ENCODE measurements at regions of chr10 and their contacts with region 1.

Region 1: GRCh38 chr10:80444646-80445319 is 9.3 kb upstream of the TSPAN14 start:
- DNase-seq: no peak
- H3K4me3 ChIP-seq: no peak overlapping the region
- H3K27me3 ChIP-seq: 0 out of 2 replicates have a peak, but pooled peaks cover 1% of the 10 kb centered on the region
- CTCF ChIP-seq: peak; percentile 90

Region 2: DNA sequence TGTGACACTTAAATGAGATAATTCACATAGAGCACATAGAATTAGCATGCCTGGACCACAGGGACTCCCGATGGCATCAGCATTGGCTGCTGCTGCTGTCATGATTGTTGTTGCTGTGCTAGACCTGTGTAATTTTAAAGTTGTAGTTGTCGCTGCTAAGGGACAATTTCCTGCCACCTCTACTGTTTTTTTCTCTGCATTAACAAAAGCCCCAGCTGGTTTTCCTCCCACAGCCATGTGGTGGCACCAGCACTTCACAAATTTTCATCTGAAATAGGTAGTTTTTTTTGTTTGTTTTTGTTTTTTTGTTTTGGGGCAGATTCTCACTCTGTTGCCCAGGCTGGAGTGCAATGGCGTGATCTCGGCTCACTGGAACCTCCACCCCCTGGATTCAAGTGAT is 61.8 kb before region 1 on chr10:
- CTCF ChIA-PET with region 1: interaction called, 10 read pairs
- POLR2A ChIA-PET with region 1: no interaction called
- DNase-seq: no peak
- H3K4me3 ChIP-seq: no peak overlapping the region
- H3K27me3 ChIP-seq: no peaks in the 10 kb centered on the region
- CTCF ChIP-seq: peak; percentile 64

Region 3: GRCh38 chr10:80408242-80409101 is 36.3 kb before region 1 on chr10 and contains the start of gene PRXL2A:
- CTCF ChIA-PET with region 1: no interaction called
- POLR2A ChIA-PET with region 1: no interaction called
- DNase-seq: no peak
- H3K4me3 ChIP-seq: peak within 1 kb of the TSS; percentile 42
- H3K27me3 ChIP-seq: peaks cover 2% of the 10 kb centered on the region; the same call in 1 of the 2 replicates
- CTCF ChIP-seq: no peak
- polyA plus RNA-seq, gene PRXL2A: 1.0 and 1.3 TPM in 2 replicates

Region 4: DNA sequence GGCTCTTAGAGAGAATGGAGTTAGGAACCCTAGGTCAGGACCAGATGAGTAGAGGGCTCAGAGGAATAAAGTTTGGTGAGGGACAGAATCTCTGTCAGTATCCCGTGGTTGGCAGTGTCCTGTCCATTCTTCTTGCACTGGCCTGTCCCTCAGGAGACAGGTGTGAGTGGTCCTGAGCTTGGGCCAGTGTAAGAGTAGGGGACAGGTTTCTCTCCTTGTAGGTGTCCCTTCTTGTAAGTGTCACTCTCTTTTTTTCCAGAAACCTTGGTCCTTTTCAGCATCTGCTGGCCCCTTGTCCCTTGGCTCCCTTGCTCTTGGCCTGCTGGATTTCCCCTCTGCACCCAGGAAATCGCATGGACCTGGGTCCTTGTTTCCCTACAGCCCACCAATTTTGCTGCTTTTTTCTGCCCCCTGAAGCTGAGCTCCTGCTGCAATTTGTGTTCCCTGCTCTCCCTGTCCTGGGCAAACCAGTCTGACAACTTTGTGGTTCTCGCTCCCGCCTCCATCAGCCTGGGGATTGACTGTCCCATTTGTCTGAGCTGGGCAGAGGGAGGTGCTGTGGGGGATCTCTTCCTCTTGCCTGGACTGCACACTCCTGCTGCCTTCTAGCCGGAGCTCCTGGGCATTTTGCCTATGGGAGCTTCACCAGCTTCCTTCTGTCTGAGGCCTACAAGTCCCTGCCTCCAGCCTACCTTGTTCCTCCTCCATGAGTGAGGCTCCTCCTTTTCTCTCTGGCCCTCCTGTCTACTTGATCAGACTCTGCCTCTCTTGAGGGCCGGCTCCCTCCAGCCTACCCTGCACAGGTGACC is 15.8 kb after region 1 on chr10:
- CTCF ChIA-PET with region 1: interaction called, 24 read pairs
- POLR2A ChIA-PET with region 1: interaction called, 5 read pairs
- DNase-seq: no peak
- H3K4me3 ChIP-seq: no peak overlapping the region
- H3K27me3 ChIP-seq: no peaks in the 10 kb centered on the region
- CTCF ChIP-seq: no peak

Region 5: GRCh38 chr10:80480852-80481251 is 36.1 kb after region 1 on chr10:
- CTCF ChIA-PET with region 1: no interaction called
- POLR2A ChIA-PET with region 1: no interaction called
- DNase-seq: no peak
- H3K4me3 ChIP-seq: no peak overlapping the region
- H3K27me3 ChIP-seq: no peaks in the 10 kb centered on the region
- CTCF ChIP-seq: no peak

Region 6: DNA sequence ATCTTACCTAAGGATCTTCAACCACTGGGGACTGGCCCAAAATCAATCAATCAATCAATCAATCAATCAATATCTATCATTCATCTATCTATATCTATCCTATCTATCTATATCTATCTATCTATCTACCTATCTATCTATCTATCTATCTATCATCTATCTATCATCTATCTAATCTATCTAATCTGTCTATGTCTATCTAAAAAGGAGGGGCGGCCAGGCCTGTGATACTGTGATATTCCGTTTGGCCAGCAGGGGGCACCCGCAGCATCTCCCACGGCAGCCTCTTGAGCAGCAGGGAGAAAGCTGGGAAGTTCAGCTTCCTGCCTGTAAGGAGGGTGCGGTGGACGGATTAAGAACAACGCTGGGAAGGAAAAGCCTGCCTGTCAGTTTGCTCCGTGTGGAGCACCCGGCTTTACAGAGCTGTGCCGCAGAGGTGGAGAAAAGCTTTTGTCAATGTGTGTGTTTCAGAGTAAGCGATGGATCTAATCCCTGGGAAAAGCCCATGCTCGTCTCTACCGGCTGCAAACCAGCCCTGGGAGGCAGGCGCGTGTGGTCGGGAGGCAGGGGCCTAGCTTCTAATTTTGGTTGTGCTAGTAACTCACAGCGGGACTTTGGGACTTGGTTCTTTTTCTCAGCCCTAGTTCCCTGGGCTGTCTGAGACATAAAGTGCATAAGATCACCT is 217.9 kb after region 1 on chr10:
- CTCF ChIA-PET with region 1: interaction called, 17 read pairs
- POLR2A ChIA-PET with region 1: no interaction called
- DNase-seq: peak; percentile 19
- H3K4me3 ChIP-seq: no peak overlapping the region
- H3K27me3 ChIP-seq: no peaks in the 10 kb centered on the region
- CTCF ChIP-seq: peak; percentile 90

Region 7: DNA sequence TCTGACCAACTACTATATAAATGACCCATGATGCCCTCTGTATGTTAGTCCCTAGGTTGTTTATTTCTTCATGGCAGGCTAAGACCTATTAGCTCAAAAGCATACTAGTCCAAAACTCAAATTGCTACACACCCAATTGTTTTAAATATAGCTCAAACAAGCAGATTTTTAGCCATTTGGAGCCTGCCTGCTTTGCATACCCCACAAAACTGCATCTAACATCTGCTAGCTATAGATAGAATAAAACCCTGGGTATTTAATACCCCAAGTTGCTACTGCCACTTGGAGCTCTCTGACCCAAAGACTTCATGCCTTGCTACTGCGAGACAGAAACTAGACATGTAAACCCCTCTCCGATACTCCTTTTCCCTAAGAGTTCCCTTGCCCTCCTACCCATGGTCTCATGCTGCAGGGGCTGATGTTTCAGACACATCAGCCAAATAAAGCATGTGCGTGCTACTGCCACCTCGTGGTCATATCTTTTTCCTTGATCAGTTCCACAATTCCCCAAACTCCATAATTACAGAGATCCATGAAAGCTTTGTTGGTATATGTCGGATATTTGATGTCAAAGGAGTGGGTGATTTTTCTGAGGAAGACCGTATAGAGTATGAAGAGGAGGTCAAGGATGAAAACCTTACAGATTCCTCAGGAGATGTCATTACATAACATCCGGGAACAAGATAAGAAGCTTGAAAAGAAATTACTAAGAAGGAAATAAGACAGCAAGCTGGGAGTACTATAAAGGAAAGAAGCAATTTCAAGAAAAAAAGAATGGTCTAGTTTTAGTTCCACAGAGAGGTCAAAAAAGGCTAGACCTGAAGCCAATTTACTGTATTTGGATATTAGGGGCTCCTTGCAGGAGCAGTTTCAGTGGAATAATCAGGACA is 479.5 kb after region 1 on chr10:
- CTCF ChIA-PET with region 1: interaction called, 23 read pairs
- POLR2A ChIA-PET with region 1: no interaction called
- DNase-seq: no peak
- H3K4me3 ChIP-seq: no peak overlapping the region
- H3K27me3 ChIP-seq: no peaks in the 10 kb centered on the region
- CTCF ChIP-seq: peak; percentile 48